Activated T-helper 2 cell treated with anti-CD3 and anti-CD28 coated beads, Interferon-gamma antibody, Interleukin-2, Interleukin-4, amounts not matched to agents 10 μg/mL and 5 μg/mL and 100 μg/mL, durations not matched to agents 14 hours and 24 hours and 36 hours (primary cell): ENCODE measurements at regions of chr2 and their contacts with region 1.

Region 1: DNA sequence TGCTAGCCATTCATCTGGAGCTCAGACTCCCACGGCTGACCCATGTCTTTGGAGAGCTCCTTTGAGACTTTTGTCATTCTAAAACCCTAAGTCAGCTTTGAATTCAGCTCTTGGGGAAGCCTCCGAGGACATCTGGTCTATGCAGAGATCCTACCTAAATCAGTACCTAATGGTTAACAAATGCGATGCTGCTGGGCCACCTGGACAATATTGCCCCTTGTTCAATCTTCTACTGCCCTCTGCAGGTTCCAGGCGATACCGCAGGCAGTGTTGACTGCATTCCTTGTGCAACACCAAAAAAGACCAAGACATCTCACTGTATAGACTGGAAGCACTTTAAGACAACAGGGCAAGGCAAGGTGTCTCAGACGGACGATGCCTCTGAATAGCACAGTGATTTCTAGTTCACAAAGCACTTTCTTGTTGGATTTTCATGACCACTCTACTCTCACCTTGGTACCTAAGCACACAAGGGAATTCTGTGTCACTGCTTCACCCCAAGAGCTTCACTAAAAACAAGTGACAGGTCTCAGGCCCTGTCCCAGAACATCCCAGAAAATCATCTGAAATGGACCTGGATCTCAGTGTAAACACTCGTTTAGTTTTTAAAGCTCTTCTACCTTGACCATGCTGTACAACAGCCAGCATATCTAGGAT is 80.9 kb downstream of the XDH start:
- DNase-seq: peak; percentile 68
- H3K4me3 Mint-ChIP-seq: no peak overlapping the region
- H3K27ac Mint-ChIP-seq: no peak overlapping the region
- H3K4me1 Mint-ChIP-seq: peaks cover 2% of the 10 kb centered on the region
- H3K27me3 Mint-ChIP-seq: peaks cover 25% of the 10 kb centered on the region

Region 2: GRCh38 chr2:30729031-30729430 is 604.6 kb before region 1 on chr2:
- intact Hi-C with region 1: loop called (anchors 5 kb)
- DNase-seq: no peak
- H3K4me3 Mint-ChIP-seq: no peak overlapping the region
- H3K27ac Mint-ChIP-seq: no peak overlapping the region
- H3K4me1 Mint-ChIP-seq: no peaks in the 10 kb centered on the region
- H3K27me3 Mint-ChIP-seq: peaks cover 11% of the 10 kb centered on the region

Region 3: GRCh38 chr2:30862054-30862651 is 471.5 kb before region 1 on chr2:
- intact Hi-C with region 1: loop called (anchors 5 kb)
- DNase-seq: peak; percentile 25
- H3K4me3 Mint-ChIP-seq: no peak overlapping the region
- H3K27ac Mint-ChIP-seq: no peak overlapping the region
- H3K4me1 Mint-ChIP-seq: peaks cover 14% of the 10 kb centered on the region
- H3K27me3 Mint-ChIP-seq: no peaks in the 10 kb centered on the region

Region 4: GRCh38 chr2:31170071-31170698 is 163.5 kb before region 1 on chr2:
- intact Hi-C with region 1: loop called (anchors 1 kb)
- DNase-seq: peak; percentile 28
- H3K4me3 Mint-ChIP-seq: no peak overlapping the region
- H3K27ac Mint-ChIP-seq: no peak overlapping the region
- H3K4me1 Mint-ChIP-seq: peaks cover under 1% of the 10 kb centered on the region
- H3K27me3 Mint-ChIP-seq: peaks cover 9% of the 10 kb centered on the region

Region 5: GRCh38 chr2:31297751-31298150 is 35.9 kb before region 1 on chr2:
- intact Hi-C with region 1: loop called (anchors 5 kb)
- DNase-seq: no peak
- H3K4me3 Mint-ChIP-seq: no peak overlapping the region
- H3K27ac Mint-ChIP-seq: no peak overlapping the region
- H3K4me1 Mint-ChIP-seq: peaks cover 2% of the 10 kb centered on the region
- H3K27me3 Mint-ChIP-seq: peaks cover 10% of the 10 kb centered on the region

Region 6: DNA sequence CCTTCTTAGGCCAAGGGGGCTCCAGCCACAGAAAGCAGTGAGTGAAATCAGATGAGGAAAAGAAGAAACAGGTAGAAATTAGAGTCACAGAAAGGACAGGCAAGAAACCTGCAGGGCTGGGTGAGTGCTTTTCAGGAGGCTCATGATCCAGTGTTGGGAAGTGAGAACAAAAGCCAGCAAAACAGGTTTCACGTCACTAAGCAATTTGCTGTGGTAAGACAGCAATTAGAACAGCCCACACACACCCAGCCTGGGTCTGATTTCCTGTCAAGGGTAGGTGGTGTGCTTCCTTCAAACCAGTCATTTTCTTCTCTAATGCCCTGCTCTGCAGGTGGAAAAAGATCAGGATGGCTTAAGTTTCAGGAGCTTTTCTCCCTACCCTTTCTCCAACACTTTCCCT is 133.8 kb after region 1 on chr2:
- intact Hi-C with region 1: no loop called
- DNase-seq: no peak
- H3K4me3 Mint-ChIP-seq: no peak overlapping the region
- H3K27ac Mint-ChIP-seq: no peak overlapping the region
- H3K4me1 Mint-ChIP-seq: no peaks in the 10 kb centered on the region
- H3K27me3 Mint-ChIP-seq: no peaks in the 10 kb centered on the region